A673 (cell line): ENCODE measurements at regions of chr12 and their contacts with region 1.

Region 1: DNA sequence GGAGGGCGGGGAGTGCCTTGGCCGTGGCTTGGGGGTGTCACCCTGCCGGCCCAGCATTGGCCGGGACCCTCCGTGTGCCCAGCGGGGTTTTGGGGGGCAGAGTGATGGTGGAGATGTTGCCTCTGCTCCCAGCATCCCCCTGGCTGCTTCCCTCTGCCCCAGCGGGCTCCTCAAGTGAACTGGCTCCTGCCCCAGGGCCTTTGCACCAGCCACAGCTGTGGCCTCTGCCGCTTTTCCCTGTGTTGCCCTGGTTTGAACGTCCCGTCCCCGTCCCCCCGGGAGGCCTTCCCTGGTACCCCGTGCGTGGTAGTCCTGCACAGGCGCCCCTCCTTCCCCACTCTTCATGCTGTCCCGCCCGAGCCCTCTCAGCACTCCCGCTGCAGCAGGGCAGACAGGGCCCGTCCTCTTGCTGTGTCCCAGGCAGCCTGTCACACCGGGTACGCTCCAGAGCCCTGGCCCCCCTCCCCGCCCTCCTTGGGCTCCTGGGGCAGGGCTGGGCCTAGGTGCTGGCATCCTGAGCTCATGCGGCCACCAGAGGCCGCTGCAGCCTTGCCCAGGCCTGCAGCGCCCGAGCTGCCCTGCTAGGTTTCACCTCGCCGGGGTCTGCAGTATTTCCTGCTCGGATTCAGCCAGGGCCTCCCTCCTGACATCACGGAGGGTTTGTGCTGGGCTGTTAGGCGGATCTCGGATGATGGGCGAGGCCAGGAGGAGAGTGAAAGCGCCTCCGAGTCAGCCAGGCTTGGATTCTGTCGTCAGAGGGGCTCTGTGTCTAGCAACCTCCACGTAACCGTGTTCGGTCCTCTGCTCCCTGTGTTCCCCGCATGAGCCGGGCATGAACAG is 9.5 kb downstream of the NOC4L start:
- DNase-seq: peak; percentile 89
- H3K4me3 ChIP-seq: no peak overlapping the region
- H3K27ac ChIP-seq: no peak overlapping the region
- H3K4me1 ChIP-seq: no peaks in the 10 kb centered on the region
- H3K27me3 ChIP-seq: no peaks in the 10 kb centered on the region
- CTCF ChIP-seq: peak; percentile 97

Region 2: DNA sequence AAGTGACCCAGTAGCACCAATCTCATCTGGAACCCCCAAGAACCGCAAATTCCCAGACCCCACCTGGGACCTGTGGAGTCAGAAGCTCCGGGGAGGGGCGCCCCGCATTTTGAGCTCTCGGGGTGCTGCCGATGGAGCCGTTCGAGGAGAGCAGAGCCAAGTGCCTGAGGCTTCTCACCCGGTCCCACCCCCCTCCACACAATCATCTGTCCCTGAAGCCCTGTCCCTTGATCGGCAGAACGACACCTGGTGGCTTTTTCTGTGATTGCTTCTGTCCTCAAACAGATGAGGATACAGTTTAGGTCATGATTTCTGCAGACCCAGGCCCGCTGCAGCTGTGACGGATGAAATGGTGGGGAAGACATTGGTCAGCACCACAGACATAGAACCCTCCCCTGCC is 65.2 kb after region 1 on chr12:
- CTCF ChIA-PET with region 1: interaction called, 10 read pairs
- POLR2A ChIA-PET with region 1: no interaction called
- intact Hi-C with region 1: loop called (anchors 1 kb)
- DNase-seq: peak; percentile 72
- H3K4me3 ChIP-seq: no peak overlapping the region
- H3K27ac ChIP-seq: no peak overlapping the region
- H3K4me1 ChIP-seq: no peaks in the 10 kb centered on the region
- H3K27me3 ChIP-seq: no peaks in the 10 kb centered on the region
- CTCF ChIP-seq: peak; percentile 68

Region 3: DNA sequence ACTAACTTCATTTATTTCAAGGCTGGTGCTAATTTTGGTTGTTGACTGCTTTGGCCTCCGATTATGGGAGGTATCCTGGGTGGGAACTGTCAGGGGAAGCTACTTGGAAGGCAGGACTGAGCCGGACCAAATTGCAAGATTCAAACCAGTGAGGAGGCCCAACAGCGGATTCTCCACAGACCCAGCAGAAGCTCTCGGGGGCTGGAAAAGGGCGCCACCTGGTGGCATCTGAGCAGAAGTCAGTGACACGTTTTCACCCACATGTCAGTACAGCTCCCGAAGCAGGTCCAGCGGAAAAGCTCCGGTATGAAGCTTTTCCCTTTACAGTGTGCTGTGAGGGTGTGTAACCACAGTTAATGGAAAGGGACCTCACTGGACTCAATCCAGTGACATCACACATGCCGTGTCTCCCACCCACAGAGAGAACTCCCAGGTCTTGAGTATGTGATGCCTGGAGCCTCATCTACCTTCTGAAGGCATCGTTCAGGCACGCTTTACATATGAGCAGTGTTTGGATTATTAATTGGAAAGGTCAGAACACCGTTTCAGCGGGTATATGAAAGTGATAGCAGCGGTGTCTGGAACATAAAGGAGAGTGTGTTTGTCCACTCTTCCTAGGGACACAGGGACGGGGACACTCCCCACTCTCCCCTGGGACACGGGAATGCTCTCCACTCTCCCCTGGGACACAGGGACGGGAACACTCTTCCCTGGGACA is 461.3 kb after region 1 on chr12:
- CTCF ChIA-PET with region 1: interaction called, 6 read pairs
- POLR2A ChIA-PET with region 1: no interaction called
- intact Hi-C with region 1: loop called (anchors 2 kb)
- DNase-seq: peak; percentile 92
- H3K4me3 ChIP-seq: no peak overlapping the region
- H3K27ac ChIP-seq: no peak overlapping the region
- H3K4me1 ChIP-seq: peaks cover 5% of the 10 kb centered on the region
- H3K27me3 ChIP-seq: peaks cover 37% of the 10 kb centered on the region
- CTCF ChIP-seq: peak; percentile 95